ENCODE measurements at regions of chr1 and their contacts with region 1.

Region 1: DNA sequence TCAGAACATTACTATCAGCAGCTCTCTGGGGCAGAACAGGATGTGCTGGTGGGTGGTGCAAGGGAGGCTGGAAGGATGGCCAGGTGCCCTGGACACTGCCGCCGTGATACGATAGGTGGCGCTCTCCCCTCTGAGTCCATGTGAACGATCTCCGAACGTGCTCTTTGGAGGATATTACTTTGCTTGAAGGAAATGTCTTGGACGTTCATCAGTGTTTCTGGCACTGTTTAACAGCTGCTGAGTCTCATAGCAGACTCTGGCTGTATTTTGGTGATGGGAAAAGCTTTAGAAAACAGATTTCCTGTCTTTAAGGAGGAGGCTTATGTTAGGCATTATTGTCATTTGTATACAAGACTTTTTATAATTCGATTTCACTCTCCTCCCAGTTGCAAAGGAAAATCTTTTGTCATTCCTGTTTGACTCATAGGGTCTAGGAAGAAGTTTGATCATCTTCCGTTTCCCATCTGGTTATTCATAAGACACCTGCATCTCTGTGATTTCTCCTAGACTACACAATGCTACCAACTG is 386.2 kb upstream of the ADGRL2 start:
- DNase-seq: peak; percentile 66
- H3K4me3 ChIP-seq: no peak overlapping the region
- H3K27ac ChIP-seq: no peak overlapping the region
- H3K4me1 ChIP-seq: peaks cover 8% of the 10 kb centered on the region
- H3K27me3 ChIP-seq: no peaks in the 10 kb centered on the region
- CTCF ChIP-seq: peak; percentile 80
- POLR2A ChIP-seq: no peak

Region 2: GRCh38 chr1:81478219-81478618 is 63.7 kb after region 1 on chr1:
- CTCF ChIA-PET with region 1: no interaction called
- POLR2A ChIA-PET with region 1: no interaction called
- dilution Hi-C with region 1: no loop called
- intact Hi-C with region 1: loop called (anchors 1 kb)
- DNase-seq: no peak
- H3K4me3 ChIP-seq: no peak overlapping the region
- H3K27ac ChIP-seq: no peak overlapping the region
- H3K4me1 ChIP-seq: no peaks in the 10 kb centered on the region
- H3K27me3 ChIP-seq: peaks cover 0 to 1% of the 10 kb centered on the region in 2 experiments
- CTCF ChIP-seq: no peak
- POLR2A ChIP-seq: no peak